Activated T-helper 1 cell treated with anti-CD3 and anti-CD28 coated beads, Interleukin-12 subunit alpha, Interleukin-12 subunit beta, Interleukin-2, Interleukin-4 antibody, amounts not matched to agents 30 ng/mL and 10 ng/mL and 1 ng/mL, durations not matched to agents 14 hours and 24 hours and 36 hours (primary cell): ENCODE measurements at regions of chr12 and their contacts with region 1.

Region 1: GRCh38 chr12:70576346-70577282 is 60.6 kb downstream of the PTPRB start:
- DNase-seq: no peak
- H3K4me3 Mint-ChIP-seq: no peak overlapping the region
- H3K27ac Mint-ChIP-seq: no peak overlapping the region
- H3K4me1 Mint-ChIP-seq: no peaks in the 10 kb centered on the region
- H3K27me3 Mint-ChIP-seq: peaks cover 3% of the 10 kb centered on the region

Region 2: GRCh38 chr12:69879041-69879960 is 697.3 kb before region 1 on chr12:
- intact Hi-C with region 1: loop called (anchors 1 kb)
- DNase-seq: peak; percentile 45
- H3K4me3 Mint-ChIP-seq: no peak overlapping the region
- H3K27ac Mint-ChIP-seq: no peak overlapping the region
- H3K4me1 Mint-ChIP-seq: peaks cover 8% of the 10 kb centered on the region
- H3K27me3 Mint-ChIP-seq: peaks cover 12% of the 10 kb centered on the region

Region 3: DNA sequence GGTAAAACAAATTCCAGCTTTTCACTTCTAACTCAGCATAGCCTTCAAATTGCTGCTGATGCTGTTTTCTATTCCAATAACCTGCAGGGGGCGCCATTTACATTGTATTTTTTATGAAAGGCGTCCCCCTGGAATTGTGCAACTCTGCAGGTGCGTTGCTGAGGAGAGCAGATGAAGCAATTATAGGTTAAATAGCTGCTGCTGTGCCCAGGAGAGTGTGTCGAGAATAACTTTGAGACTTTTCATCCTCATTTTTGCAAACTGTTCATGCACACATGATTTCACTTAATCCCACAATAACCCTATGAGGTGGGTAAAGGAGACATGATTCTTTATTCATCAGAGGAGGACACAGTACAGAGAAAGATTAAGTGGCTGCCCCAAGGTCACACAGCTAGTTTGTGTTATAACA is 675.9 kb before region 1 on chr12:
- intact Hi-C with region 1: loop called (anchors 1 kb)
- DNase-seq: peak; percentile 29
- H3K4me3 Mint-ChIP-seq: no peak overlapping the region
- H3K27ac Mint-ChIP-seq: no peak overlapping the region
- H3K4me1 Mint-ChIP-seq: no peaks in the 10 kb centered on the region
- H3K27me3 Mint-ChIP-seq: peaks cover 2% of the 10 kb centered on the region

Region 4: GRCh38 chr12:70121557-70121956 is 455.1 kb before region 1 on chr12:
- intact Hi-C with region 1: loop called (anchors 5 kb)
- DNase-seq: no peak
- H3K4me3 Mint-ChIP-seq: no peak overlapping the region
- H3K27ac Mint-ChIP-seq: no peak overlapping the region
- H3K4me1 Mint-ChIP-seq: no peaks in the 10 kb centered on the region
- H3K27me3 Mint-ChIP-seq: no peaks in the 10 kb centered on the region

Region 5: DNA sequence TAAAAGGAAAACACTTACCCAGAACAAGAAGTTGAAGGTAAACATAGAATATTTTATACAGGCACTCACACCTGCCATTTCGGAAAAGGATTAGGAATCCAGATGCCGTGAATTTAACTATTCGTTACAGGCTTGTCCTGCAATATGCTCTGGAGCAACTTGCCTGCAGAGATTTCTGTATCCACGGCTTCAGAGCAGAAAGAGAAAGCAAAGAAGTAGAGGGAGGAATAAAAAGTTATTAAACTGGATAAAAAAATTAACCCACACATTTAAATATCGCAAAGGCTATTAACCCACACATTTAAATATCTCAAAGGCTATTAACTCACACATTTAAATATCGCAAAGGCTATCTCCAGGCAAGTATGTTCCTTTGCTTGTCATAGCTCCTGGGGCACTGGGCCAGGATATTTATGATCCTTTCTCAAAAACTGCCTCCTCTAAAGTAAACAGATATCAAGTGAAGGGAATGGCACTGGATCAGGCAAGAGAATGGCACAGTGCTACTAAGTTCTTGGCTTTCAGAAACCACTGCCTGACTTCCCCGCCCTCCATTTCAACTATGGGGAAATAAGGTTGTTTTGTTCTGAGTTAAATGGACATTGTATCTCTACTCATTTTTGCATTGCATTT is 581.1 kb after region 1 on chr12 and contains the start of gene TSPAN8:
- intact Hi-C with region 1: no loop called
- DNase-seq: no peak
- H3K4me3 Mint-ChIP-seq: no peak within 1 kb of the TSS
- H3K27ac Mint-ChIP-seq: no peak within 1 kb of the TSS
- H3K4me1 Mint-ChIP-seq: no peaks in the 10 kb centered on the region
- H3K27me3 Mint-ChIP-seq: no peaks in the 10 kb centered on the region
- total RNA-seq, gene TSPAN8: not detected in 2 replicates